A549 (cell line): ENCODE measurements at regions of chr6 and their contacts with region 1.

Region 1: GRCh38 chr6:37691904-37692806 is 5.5 kb downstream of the MDGA1 start:
- DNase-seq: peak; percentile 58 to 69
- ATAC-seq: peak; percentile 79 to 91
- H3K4me3 ChIP-seq: no peak overlapping the region
- H3K27ac ChIP-seq: peak overlapping the region in 1 of 2 experiments; percentile 61; a peak in 2 of 6 replicates
- H3K4me1 ChIP-seq: peaks cover 20% of the 10 kb centered on the region
- CTCF ChIP-seq: peak; percentile 78
- EP300 ChIP-seq: no peak
- POLR2A ChIP-seq: no peak
- RAD21 ChIP-seq: peak; percentile 94

Region 2: DNA sequence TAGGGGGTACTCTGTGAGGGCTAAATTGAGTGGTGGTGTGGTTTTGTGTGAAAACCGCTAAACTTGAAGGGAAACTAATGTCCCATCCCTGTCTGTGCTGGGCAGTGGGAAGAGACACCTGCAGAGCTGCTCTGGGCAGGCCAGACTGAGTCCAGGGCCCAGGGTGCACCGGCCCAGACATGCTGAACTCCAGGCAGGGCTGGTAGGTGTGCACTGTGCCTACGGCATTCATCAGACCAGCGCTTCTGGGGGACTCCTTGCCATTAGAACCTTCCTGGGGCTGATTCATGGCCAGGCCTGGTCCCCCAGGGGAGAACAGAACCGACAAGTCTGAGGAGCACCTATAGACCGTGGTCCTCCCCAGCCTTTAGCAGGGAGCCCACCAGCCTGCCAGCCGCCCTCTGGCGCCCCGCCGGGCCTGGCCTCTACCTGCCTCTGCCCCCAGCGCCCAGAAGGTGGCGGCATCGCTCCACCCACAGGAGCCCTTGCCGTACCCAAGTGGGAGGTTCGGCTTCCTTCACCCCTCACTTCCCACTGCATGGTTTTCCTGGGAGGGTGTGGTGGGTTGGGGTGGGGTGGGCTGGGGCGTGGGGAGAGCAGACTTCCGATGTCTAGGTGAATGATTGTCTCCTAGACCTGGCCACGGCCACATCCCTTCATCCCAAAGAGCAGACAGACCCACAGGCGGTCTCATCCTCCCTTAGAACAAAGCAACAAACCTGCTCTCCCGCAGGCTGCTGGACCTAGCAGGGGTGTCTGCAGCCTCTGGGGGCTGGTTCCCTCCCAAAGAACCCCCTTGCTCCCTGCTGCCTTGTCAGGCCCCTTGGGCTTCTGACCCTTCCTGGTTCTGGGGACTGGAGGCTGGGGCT is 208.0 kb before region 1 on chr6:
- CTCF ChIA-PET with region 1: interaction called, 30 read pairs
- POLR2A ChIA-PET with region 1: no interaction called
- DNase-seq: peak; percentile 26 to 55
- ATAC-seq: peak; percentile 88 to 93
- H3K4me3 ChIP-seq: no peak overlapping the region
- H3K27ac ChIP-seq: 0 out of 6 replicates have a peak overlapping the region, but pooled peaks of 1 of the 2 experiments have one; percentile 15
- H3K4me1 ChIP-seq: no peaks in the 10 kb centered on the region
- CTCF ChIP-seq: peak; percentile 71
- EP300 ChIP-seq: no peak
- POLR2A ChIP-seq: no peak
- RAD21 ChIP-seq: peak; percentile 84 to 85

Region 3: GRCh38 chr6:37554480-37554819 is 137.7 kb before region 1 on chr6:
- CTCF ChIA-PET with region 1: interaction called, 10 read pairs
- POLR2A ChIA-PET with region 1: no interaction called
- DNase-seq: no peak
- ATAC-seq: peak in 1 of 2 experiments; percentile 38; a peak in 1 of 6 replicates
- H3K4me3 ChIP-seq: no peak overlapping the region
- H3K27ac ChIP-seq: peak overlapping the region; percentile 56 to 80
- H3K4me1 ChIP-seq: peaks cover 35% of the 10 kb centered on the region
- CTCF ChIP-seq: no peak
- EP300 ChIP-seq: no peak
- POLR2A ChIP-seq: no peak
- RAD21 ChIP-seq: no peak

Region 4: GRCh38 chr6:37582306-37582705 is 109.8 kb before region 1 on chr6:
- CTCF ChIA-PET with region 1: interaction called, 10 read pairs
- POLR2A ChIA-PET with region 1: no interaction called
- DNase-seq: no peak
- ATAC-seq: no peak
- H3K4me3 ChIP-seq: no peak overlapping the region
- H3K27ac ChIP-seq: no peak overlapping the region
- H3K4me1 ChIP-seq: peaks cover 2% of the 10 kb centered on the region
- CTCF ChIP-seq: no peak
- EP300 ChIP-seq: no peak
- POLR2A ChIP-seq: no peak
- RAD21 ChIP-seq: no peak

Region 5: DNA sequence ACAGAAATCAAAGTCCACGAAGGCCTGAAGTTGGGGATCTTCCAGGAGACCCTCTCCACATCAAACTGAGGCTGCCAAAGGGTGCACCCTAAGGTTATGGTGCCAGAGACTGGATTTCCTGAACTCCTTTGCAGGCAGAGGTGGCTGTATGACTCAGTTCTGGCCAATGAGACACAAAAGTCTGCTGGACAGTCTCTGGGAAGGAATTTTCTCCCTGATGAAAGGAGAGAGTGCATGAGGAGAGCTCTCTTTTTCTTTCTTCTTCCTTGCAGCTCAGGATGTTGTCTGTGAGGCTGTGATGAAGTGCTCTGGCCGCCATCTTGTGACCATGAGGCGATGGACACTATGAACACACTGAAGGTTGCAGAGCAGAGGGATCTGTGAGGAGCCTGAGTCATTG is 79.7 kb before region 1 on chr6:
- CTCF ChIA-PET with region 1: interaction called, 11 read pairs
- POLR2A ChIA-PET with region 1: no interaction called
- DNase-seq: no peak
- ATAC-seq: no peak
- H3K4me3 ChIP-seq: no peak overlapping the region
- H3K27ac ChIP-seq: no peak overlapping the region
- H3K4me1 ChIP-seq: 0 out of 3 replicates have a peak, but pooled peaks cover 2% of the 10 kb centered on the region
- CTCF ChIP-seq: no peak
- EP300 ChIP-seq: no peak
- POLR2A ChIP-seq: no peak
- RAD21 ChIP-seq: no peak

Region 6: DNA sequence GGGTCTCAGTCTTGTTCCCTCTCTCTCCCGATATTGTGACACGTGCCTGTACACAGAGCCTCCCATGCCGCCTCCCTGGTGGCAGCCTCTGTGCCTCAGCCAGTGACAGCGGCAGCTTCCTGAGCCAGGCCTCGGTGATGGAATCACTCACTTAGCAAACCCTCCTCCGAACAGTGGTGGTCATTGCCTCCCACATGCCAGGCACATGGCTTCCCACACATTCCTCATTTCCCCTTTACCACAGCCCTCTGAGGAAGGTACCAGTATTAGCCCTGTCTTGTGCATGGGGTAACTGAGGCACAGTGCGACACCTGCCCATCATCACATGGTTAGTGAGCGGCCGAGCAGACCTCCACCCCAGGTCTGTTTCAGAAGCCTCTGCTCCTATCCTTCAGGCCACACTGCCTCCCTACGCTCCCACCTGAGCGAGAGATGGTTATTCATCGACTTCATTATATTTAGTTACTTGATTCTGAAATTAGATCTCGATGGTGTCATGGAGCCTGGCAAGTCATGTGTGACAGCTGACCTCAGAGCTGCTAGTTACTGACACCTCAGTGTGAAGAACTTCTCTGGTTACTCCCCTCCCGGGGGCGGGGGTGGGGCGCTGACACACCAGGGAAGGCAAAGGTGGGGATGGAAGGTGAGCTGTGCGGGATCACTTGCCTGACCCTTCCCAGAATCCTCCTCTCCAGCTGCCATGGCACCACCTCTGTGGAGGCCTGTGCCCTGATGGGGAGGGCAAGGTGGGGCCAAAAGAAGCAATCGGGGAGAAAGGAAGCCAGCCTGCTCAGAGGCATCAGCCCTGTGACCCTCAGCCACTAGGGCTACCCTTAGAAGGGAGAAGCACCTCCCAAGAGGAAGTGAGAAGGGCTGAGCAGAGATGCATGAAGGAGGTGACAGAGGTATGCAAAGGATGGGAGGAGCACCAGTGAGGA is 12.3 kb before region 1 on chr6:
- CTCF ChIA-PET with region 1: interaction called, 21 read pairs
- POLR2A ChIA-PET with region 1: no interaction called
- DNase-seq: no peak
- ATAC-seq: no peak
- H3K4me3 ChIP-seq: no peak overlapping the region
- H3K27ac ChIP-seq: no peak overlapping the region
- H3K4me1 ChIP-seq: no peaks in the 10 kb centered on the region
- CTCF ChIP-seq: no peak
- EP300 ChIP-seq: no peak
- POLR2A ChIP-seq: no peak
- RAD21 ChIP-seq: no peak

Region 7: GRCh38 chr6:37783856-37784584 is 91.9 kb after region 1 on chr6:
- CTCF ChIA-PET with region 1: no interaction called
- POLR2A ChIA-PET with region 1: no interaction called
- DNase-seq: no peak
- ATAC-seq: no peak
- H3K4me3 ChIP-seq: no peak overlapping the region
- H3K27ac ChIP-seq: no peak overlapping the region
- H3K4me1 ChIP-seq: peaks cover 5% of the 10 kb centered on the region; the same call in 1 of the 3 replicates
- CTCF ChIP-seq: no peak
- EP300 ChIP-seq: no peak
- POLR2A ChIP-seq: no peak
- RAD21 ChIP-seq: no peak